Kidney (tissue), 22 donors: ENCODE measurements at regions of chr9 and their contacts with region 1.

Region 1: GRCh38 chr9:93962561-93963440 is 7.6 kb upstream of the BARX1 start:
- DNase-seq: peak; percentile 87 to 97 (median 90)
- H3K4me3 ChIP-seq: no peak overlapping the region
- H3K27ac ChIP-seq: no peak overlapping the region
- H3K4me1 ChIP-seq: peaks cover 0 to 9% (median 3%) of the 10 kb centered on the region in 3 donors
- H3K27me3 ChIP-seq: peaks cover 36% of the 10 kb centered on the region
- CTCF ChIP-seq: peak; percentile 78

Region 2: GRCh38 chr9:93682232-93682968 is 280.4 kb before region 1 on chr9:
- intact Hi-C with region 1: loop called (anchors 10 kb)
- DNase-seq: peak; percentile 47 to 82 (median 71)
- H3K4me3 ChIP-seq: no peak overlapping the region
- H3K27ac ChIP-seq: no peak overlapping the region
- H3K4me1 ChIP-seq: no peaks in the 10 kb centered on the region
- H3K27me3 ChIP-seq: no peaks in the 10 kb centered on the region
- CTCF ChIP-seq: peak; percentile 58